Ascending aorta (tissue), 2 donors: ENCODE measurements at regions of chr21 and their contacts with region 1.

Region 1: DNA sequence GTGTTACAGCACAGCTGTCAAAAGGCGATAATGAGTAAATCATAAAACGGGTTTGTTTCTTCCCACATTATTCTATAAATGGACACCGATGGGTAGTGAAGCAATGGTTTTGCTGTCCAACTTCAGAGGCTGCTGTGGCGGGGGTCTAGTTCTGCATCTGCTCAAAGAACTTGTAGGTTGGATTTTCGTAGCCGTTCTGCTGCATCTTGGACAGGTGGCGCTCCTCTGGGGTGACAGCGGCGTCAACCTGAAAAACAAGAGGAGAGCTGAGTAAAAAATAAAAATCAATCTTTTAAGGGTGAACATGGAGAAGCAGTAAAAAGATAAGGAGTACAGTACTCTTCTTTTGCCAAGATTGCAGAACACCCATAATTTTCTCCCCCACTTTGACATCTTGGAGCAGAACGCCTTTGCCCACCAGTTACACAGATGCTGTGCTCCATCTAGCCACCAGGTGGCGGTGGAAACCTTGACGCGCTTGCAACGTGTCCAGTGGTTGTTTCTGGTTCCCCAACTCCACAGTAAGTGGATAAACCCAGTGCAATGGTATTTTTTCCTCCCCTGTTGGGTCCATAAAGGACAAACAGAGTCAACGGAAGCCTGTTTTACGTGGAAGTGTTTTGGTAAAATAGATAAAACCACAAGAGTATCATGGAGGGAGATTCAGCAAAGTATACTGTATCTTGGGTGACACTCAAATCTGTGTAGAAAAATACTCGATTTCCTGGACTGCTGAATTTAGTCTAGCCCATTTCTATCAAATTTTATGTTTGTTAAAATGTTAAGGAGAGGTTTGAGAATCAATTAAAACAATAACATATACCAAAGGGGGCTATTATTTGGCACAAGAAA is 147.0 kb downstream of the GABPA start:
- DNase-seq: peak in 1 of 2 donors; percentile 83
- H3K4me3 ChIP-seq: no peak overlapping the region
- H3K27ac ChIP-seq: no peak overlapping the region
- H3K4me1 ChIP-seq: no peaks in the 10 kb centered on the region
- H3K27me3 ChIP-seq: no peaks in the 10 kb centered on the region
- CTCF ChIP-seq: peak; percentile 78 to 95 (median 93)

Region 2: DNA sequence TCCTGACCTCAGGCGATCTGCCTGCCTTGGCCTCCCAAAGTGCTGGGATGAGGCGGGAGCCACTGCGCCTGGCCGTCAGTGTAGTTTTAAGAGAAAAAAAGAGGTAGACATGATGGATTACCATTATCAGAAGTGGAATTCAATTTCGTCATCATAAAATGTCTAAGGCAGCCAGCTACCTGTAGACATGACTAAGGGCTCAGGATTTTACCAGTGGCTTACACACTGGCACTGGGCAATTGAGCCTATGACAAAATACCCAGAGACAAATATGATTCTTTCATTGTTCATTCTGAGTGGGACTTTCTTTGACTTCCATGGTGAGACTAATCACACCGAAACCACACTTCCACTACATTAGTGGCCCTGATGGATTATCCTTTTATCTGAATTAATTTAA is 34.5 kb after region 1 on chr21:
- intact Hi-C with region 1: no loop called
- DNase-seq: no peak
- H3K4me3 ChIP-seq: no peak overlapping the region
- H3K27ac ChIP-seq: no peak overlapping the region
- H3K4me1 ChIP-seq: no peaks in the 10 kb centered on the region
- H3K27me3 ChIP-seq: no peaks in the 10 kb centered on the region
- CTCF ChIP-seq: no peak

Region 3: GRCh38 chr21:26007951-26008498 is 126.3 kb after region 1 on chr21:
- intact Hi-C with region 1: no loop called
- DNase-seq: no peak
- H3K4me3 ChIP-seq: no peak overlapping the region
- H3K27ac ChIP-seq: peak overlapping the region in 1 of 2 donors; percentile 9
- H3K4me1 ChIP-seq: no peaks in the 10 kb centered on the region
- H3K27me3 ChIP-seq: no peaks in the 10 kb centered on the region
- CTCF ChIP-seq: no peak

Region 4: GRCh38 chr21:26715878-26716506 is 834.2 kb after region 1 on chr21:
- intact Hi-C with region 1: loop called (anchors 5 kb)
- DNase-seq: no peak
- H3K4me3 ChIP-seq: no peak overlapping the region
- H3K27ac ChIP-seq: no peak overlapping the region
- H3K4me1 ChIP-seq: no peaks in the 10 kb centered on the region
- H3K27me3 ChIP-seq: no peaks in the 10 kb centered on the region
- CTCF ChIP-seq: peak in 2 of 3 experiments; percentile 63 to 79